ENCODE measurements at regions of chr3 and their contacts with region 1.

Region 1: GRCh38 chr3:106228271-106228670 is 359.5 kb upstream of the CBLB start:
- DNase-seq: no peak
- ATAC-seq: no peak
- H3K4me3 ChIP-seq: no peak overlapping the region
- H3K27ac ChIP-seq: no peak overlapping the region
- H3K4me1 ChIP-seq: no peaks in the 10 kb centered on the region
- H3K27me3 ChIP-seq: no peaks in the 10 kb centered on the region
- CTCF ChIP-seq: no peak
- POLR2A ChIP-seq: no peak

Region 2: GRCh38 chr3:106176734-106177133 is 51.5 kb before region 1 on chr3:
- intact Hi-C with region 1: loop called in 1 of 10 experiments (anchors 10 kb)
- DNase-seq: no peak
- ATAC-seq: no peak
- H3K4me3 ChIP-seq: peak overlapping the region in 3 of 12 donors; percentile 1 to 27 (median 23)
- H3K27ac ChIP-seq: peak overlapping the region in 1 of 12 donors; percentile 61
- H3K4me1 ChIP-seq: peaks cover 0 to 17% (median 0%) of the 10 kb centered on the region in 12 donors
- H3K27me3 ChIP-seq: no peaks in the 10 kb centered on the region
- CTCF ChIP-seq: no peak
- POLR2A ChIP-seq: no peak